Aorta (tissue), 5 donors: ENCODE measurements at regions of chrX and their contacts with region 1.

Region 1: DNA sequence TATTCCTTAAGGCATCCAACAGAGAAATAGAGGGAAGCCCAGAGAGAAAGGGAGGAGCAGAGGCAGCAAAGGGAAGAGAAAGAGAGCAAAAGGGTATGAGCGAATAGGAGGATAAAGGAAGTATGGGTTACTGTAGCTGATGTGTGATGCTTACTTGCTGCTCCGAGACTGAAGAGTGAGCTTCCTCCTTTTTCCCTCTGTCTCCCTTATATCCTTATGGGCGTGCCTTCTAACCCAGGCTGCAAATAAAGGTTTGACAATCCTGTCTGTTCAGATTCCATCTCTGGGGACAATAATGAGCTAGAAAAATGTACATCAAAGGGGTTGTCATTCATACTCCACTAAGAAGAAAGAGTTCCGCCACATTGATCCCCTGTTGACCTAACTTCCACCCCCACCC is 431 bp upstream of the GABRA3 start:
- DNase-seq: no peak
- ATAC-seq: no peak
- H3K4me3 ChIP-seq: no peak overlapping the region
- H3K27ac ChIP-seq: no peak overlapping the region
- H3K4me1 ChIP-seq: no peaks in the 10 kb centered on the region
- H3K27me3 ChIP-seq: no peaks in the 10 kb centered on the region

Region 2: GRCh38 chrX:151753313-151754041 is 698.1 kb before region 1 on chrX:
- intact Hi-C with region 1: loop called in 1 of 2 experiments (anchors 10 kb)
- DNase-seq: peak; percentile 58 to 82
- ATAC-seq: peak; percentile 82
- H3K4me3 ChIP-seq: no peak overlapping the region
- H3K27ac ChIP-seq: no peak overlapping the region
- H3K4me1 ChIP-seq: no peaks in the 10 kb centered on the region
- H3K27me3 ChIP-seq: no peaks in the 10 kb centered on the region